ENCODE measurements at regions of chr18 and their contacts with region 1.

Region 1: DNA sequence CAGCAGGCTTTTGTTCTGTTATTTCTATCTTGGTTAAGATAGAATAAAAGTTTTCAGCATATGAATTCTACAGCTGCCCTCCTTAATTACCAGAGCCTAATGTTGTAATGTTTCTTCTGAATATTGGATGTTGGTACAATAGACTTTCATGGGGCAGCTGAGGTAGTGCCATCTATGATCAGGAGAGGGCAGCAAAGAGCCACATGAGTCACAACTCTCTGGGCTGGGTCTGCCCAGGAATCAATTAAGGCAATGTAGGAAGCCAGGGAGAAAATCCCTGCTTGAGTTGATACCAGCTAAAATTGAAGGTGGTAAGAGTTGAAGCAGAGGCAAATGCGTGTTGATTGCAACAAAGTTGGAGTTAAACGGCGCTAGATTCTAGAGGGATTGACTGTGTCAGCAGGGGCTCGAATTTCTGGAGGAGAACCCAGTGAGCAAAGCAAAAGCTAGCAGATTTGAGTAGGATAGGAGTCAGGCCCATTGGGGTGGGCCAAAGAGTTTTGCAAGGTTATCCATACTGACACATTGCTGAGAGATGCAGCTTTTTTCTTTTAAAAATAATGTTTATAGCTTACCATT is 10.6 kb upstream of the MC5R start:
- DNase-seq: peak; percentile 51
- ATAC-seq: peak; percentile 99
- H3K4me3 ChIP-seq: no peak overlapping the region
- H3K27ac ChIP-seq: no peak overlapping the region
- H3K4me1 ChIP-seq: no peaks in the 10 kb centered on the region
- H3K27me3 ChIP-seq: no peaks in the 10 kb centered on the region
- CTCF ChIP-seq: peak; percentile 81
- POLR2A ChIP-seq: no peak
- RAD21 ChIP-seq: peak; percentile 62

Region 2: GRCh38 chr18:13823707-13824395 is 10.5 kb after region 1 on chr18 and contains the start of gene MC5R:
- CTCF ChIA-PET with region 1: interaction called, 14 read pairs
- POLR2A ChIA-PET with region 1: no interaction called
- dilution Hi-C with region 1: no loop called
- in situ Hi-C with region 1: no loop called
- intact Hi-C with region 1: no loop called
- DNase-seq: peak; percentile 25
- ATAC-seq: peak; percentile 100
- H3K4me3 ChIP-seq: peak within 1 kb of the TSS; percentile 23
- H3K27ac ChIP-seq: no peak within 1 kb of the TSS
- H3K4me1 ChIP-seq: no peaks in the 10 kb centered on the region
- H3K27me3 ChIP-seq: no peaks in the 10 kb centered on the region
- CTCF ChIP-seq: peak; percentile 92
- POLR2A ChIP-seq: no peak
- RAD21 ChIP-seq: peak; percentile 81
- total RNA-seq, gene MC5R: not detected in 2 replicates